HepG2 (cell line): ENCODE measurements at regions of chr2 and their contacts with region 1.

Region 1: DNA sequence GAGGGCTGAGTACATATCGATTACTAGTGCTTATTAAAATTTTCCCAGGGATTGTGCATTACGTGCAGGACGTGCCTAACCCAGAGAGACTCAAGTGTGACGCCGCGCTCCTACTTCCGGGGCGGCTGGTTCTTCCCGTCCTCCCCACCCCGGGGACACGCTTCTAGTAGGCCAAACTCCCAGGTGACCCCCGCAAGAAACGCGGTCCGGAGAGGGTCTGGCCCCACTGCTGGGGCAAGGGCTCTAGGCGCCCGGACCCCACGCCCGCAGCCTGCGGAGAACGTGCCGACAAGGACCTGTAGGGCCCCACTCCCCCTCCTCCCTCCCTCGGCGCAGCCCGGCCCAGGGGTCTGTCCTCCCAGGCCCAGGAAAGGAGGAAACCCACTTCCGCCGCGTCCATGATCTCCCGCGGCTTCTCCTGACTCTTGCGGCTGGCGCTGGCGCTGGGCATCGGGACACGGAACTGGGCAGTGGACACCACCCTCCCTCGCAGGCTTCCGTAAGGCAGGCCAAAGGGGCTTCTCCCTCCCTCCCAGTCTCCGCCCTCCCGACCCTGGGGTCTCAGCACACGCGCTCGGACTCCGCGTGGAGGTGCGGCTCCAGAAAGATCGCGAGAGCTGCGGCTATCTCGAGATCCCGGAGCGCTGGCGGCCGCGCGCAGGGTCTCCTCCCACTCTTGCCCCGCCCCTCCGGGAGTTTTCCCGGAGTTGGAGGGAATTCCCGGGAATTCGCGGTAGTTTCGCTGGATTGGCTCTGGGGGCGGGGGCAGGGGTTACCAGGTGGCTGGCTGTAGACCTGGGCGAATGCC is at the start of gene DARS1:
- DNase-seq: peak; percentile 96
- ATAC-seq: peak; percentile 94
- H3K4me3 ChIP-seq: peak within 1 kb of the TSS; percentile 82 to 93 (median 87)
- H3K27ac ChIP-seq: peak within 1 kb of the TSS; percentile 95
- H3K4me1 ChIP-seq: peaks cover 54% of the 10 kb centered on the region
- H3K27me3 ChIP-seq: no peaks in the 10 kb centered on the region
- CTCF ChIP-seq: no peak
- EP300 ChIP-seq: peak in 1 of 2 experiments; percentile 48; a peak in 2 of 4 replicates
- POLR2A ChIP-seq: peak; percentile 88 to 95
- RAD21 ChIP-seq: peak; percentile 32
- total RNA-seq, gene DARS1: 149 and 246 TPM in 2 replicates

Region 2: GRCh38 chr2:134934641-134935040 is 1050.6 kb before region 1 on chr2:
- CTCF ChIA-PET with region 1: no interaction called
- POLR2A ChIA-PET with region 1: no interaction called
- in situ Hi-C with region 1: no loop called
- intact Hi-C with region 1: loop called (anchors 10 kb)
- DNase-seq: no peak
- ATAC-seq: no peak
- H3K4me3 ChIP-seq: no peak overlapping the region
- H3K27ac ChIP-seq: no peak overlapping the region
- H3K4me1 ChIP-seq: peaks cover 44% of the 10 kb centered on the region
- H3K27me3 ChIP-seq: no peaks in the 10 kb centered on the region
- CTCF ChIP-seq: no peak
- EP300 ChIP-seq: no peak
- POLR2A ChIP-seq: no peak
- RAD21 ChIP-seq: no peak

Region 3: DNA sequence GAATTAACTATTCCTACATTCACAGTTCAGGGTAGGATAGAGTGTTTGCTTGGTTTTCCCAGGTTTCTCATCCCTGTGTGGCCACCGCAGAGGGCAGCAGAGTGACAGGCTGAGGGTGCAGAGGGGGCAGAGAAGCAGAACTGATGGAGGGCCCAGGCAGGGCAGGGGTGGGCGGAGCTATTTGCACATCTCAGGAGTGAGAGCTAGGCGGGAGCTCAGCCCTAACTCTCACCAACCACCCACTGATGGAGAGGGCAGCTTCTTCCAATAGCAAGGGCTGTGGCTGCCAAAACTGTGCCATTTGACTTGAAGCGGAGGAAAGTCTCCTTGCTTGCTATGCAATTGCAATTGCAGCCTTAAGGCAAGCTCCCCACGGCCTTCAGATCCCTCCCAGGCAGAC is 12.2 kb after region 1 on chr2:
- CTCF ChIA-PET with region 1: no interaction called
- POLR2A ChIA-PET with region 1: interaction called, 12 read pairs
- in situ Hi-C with region 1: no loop called
- intact Hi-C with region 1: no loop called
- DNase-seq: peak; percentile 53
- ATAC-seq: peak; percentile 99
- H3K4me3 ChIP-seq: no peak overlapping the region
- H3K27ac ChIP-seq: no peak overlapping the region
- H3K4me1 ChIP-seq: no peaks in the 10 kb centered on the region
- H3K27me3 ChIP-seq: no peaks in the 10 kb centered on the region
- CTCF ChIP-seq: peak; percentile 74
- EP300 ChIP-seq: no peak
- POLR2A ChIP-seq: no peak
- RAD21 ChIP-seq: peak; percentile 39; the same call in 1 of the 2 replicates